ENCODE measurements at regions of chr2 and their contacts with region 1.

Region 1: GRCh38 chr2:42196403-42197267 is 27.5 kb downstream of the EML4 start:
- DNase-seq: peak in 7 of 9 donors; percentile 56 to 75 (median 68)
- ATAC-seq: peak; percentile 91
- H3K4me3 ChIP-seq: no peak overlapping the region
- H3K4me3 Mint-ChIP-seq: peak overlapping the region in 9 of 10 donors; percentile 1 to 66 (median 41)
- H3K27ac ChIP-seq: peak overlapping the region; percentile 22
- H3K27ac Mint-ChIP-seq: peak overlapping the region in 8 of 9 donors; percentile 17 to 91 (median 74)
- H3K4me1 ChIP-seq: peaks cover 42 to 48% of the 10 kb centered on the region in 2 donors
- H3K4me1 Mint-ChIP-seq: peaks cover 54 to 93% (median 84%) of the 10 kb centered on the region in 7 donors
- H3K27me3 ChIP-seq: no peaks in the 10 kb centered on the region
- H3K27me3 Mint-ChIP-seq: no peaks in the 10 kb centered on the region

Region 2: DNA sequence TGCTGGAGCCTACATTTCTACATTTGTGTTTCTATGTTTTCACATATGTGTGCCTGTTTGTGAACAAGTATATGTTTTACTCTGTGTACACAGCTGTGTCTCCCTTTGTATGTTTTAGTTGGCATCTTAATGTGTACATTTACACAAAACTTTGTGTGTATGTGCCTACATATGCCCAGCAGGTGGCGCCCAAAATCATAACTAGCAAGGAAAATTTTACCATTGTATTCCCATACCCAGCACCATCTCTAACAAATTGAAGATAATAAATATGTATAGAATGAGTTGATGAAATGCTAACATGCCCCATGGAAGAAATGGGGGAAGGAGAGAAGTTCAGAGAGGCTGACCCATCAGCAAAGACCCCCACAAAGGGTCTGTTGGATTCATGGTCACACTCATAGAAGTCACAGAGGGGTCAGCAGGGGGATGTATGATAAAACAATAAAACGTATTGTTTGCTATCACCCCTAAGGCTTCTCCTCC is 100.7 kb before region 1 on chr2:
- CTCF ChIA-PET with region 1: interaction called, 59 read pairs
- POLR2A ChIA-PET with region 1: interaction called, 12 read pairs
- intact Hi-C with region 1: loop called (anchors 1 kb)
- DNase-seq: peak; percentile 46 to 78 (median 71)
- ATAC-seq: peak; percentile 71
- H3K4me3 ChIP-seq: no peak overlapping the region
- H3K4me3 Mint-ChIP-seq: no peak overlapping the region
- H3K27ac ChIP-seq: no peak overlapping the region
- H3K27ac Mint-ChIP-seq: peak overlapping the region in 7 of 9 donors; percentile 4 to 70 (median 25)
- H3K4me1 ChIP-seq: peaks cover 33 to 38% of the 10 kb centered on the region in 2 donors
- H3K4me1 Mint-ChIP-seq: peaks cover 37 to 50% (median 47%) of the 10 kb centered on the region in 7 donors
- H3K27me3 ChIP-seq: no peaks in the 10 kb centered on the region
- H3K27me3 Mint-ChIP-seq: peaks cover 0 to 35% (median 0%) of the 10 kb centered on the region in 5 donors

Region 3: DNA sequence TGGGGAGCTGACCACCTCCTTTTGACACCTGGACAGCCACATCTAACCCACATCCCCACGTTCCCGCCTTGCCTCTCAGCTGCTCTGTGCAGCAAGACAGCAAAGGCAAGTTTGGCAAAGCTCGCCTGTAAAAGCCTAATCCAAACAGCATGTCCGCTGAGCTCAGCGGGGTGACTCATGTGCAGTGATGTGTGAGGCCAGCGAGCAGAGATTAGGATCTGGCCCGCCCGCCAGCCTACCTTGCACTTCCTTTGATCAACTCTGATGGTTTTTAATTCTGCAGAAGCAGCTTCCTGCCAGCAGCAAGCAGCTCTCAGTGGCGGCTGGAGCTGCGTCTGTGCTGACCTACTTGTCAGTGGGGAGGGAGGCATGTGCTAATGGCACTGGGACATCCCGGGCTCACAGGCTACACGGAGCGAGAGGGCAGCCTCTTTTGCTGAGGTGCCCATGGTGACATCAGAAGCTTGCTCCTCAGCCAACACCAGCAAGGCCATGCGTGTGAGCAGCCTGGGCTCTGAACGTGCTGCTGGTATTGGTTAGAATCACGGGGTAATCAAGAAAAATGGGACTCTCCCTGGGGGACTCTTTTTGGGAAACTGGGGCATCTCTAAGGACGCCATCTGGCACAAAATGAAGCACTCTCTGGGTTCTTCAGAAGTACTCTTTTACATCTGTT is 63.5 kb before region 1 on chr2:
- CTCF ChIA-PET with region 1: interaction called, 8 read pairs
- POLR2A ChIA-PET with region 1: interaction called, 6 read pairs
- intact Hi-C with region 1: loop called (anchors 1 to 2 kb)
- DNase-seq: peak; percentile 53 to 92 (median 78)
- ATAC-seq: peak; percentile 94
- H3K4me3 ChIP-seq: peak overlapping the region; percentile 38
- H3K4me3 Mint-ChIP-seq: peak overlapping the region; percentile 66 to 86 (median 76)
- H3K27ac ChIP-seq: peak overlapping the region; percentile 82
- H3K27ac Mint-ChIP-seq: peak overlapping the region; percentile 68 to 98 (median 96)
- H3K4me1 ChIP-seq: peaks cover 81 to 89% of the 10 kb centered on the region in 2 donors
- H3K4me1 Mint-ChIP-seq: peaks cover 57 to 95% (median 93%) of the 10 kb centered on the region in 7 donors
- H3K27me3 ChIP-seq: no peaks in the 10 kb centered on the region
- H3K27me3 Mint-ChIP-seq: no peaks in the 10 kb centered on the region

Region 4: DNA sequence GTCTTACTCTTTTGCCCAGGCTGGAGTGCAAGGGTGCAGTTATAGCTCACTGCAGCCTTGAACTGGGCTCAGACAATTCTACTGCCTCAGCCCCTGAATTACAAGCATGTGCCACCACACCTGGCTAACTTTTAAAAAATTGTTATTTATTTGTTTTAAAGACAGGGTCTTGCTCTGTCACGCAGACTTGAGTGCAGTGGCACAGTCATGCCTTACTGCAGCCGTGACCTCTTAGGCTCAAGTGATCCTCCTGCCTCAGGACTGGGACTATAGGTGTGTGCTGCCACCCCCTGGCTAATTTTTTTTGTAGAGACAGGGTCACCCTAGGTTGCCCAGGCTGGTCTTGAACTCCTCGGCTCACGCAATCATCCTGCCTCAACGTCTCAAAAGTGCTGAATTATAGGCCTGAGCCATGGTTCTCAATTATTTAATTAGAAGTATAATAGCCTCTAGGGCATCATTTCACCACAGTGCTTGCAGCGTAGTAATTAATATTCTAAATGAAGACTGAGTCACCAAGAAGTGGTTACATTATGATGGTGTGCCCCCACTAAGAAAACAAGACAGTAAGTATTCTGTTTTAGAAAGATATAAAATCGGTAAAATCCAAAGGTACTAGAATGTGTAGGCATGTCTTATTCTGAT is 42.1 kb after region 1 on chr2:
- CTCF ChIA-PET with region 1: no interaction called
- POLR2A ChIA-PET with region 1: no interaction called
- intact Hi-C with region 1: loop called in 1 of 2 experiments (anchors 2 kb)
- DNase-seq: peak in 6 of 9 donors; percentile 22 to 42 (median 30)
- ATAC-seq: peak; percentile 75
- H3K4me3 ChIP-seq: no peak overlapping the region
- H3K4me3 Mint-ChIP-seq: peak overlapping the region in 1 of 10 donors; percentile 9
- H3K27ac ChIP-seq: no peak overlapping the region
- H3K27ac Mint-ChIP-seq: peak overlapping the region in 2 of 9 donors; percentile 43 to 65
- H3K4me1 ChIP-seq: peaks cover 32 to 33% of the 10 kb centered on the region in 2 donors
- H3K4me1 Mint-ChIP-seq: peaks cover 28 to 97% (median 89%) of the 10 kb centered on the region in 7 donors
- H3K27me3 ChIP-seq: no peaks in the 10 kb centered on the region
- H3K27me3 Mint-ChIP-seq: no peaks in the 10 kb centered on the region